Heart left ventricle (tissue), 16 donors: ENCODE measurements at regions of chr5 and their contacts with region 1.

Region 1: DNA sequence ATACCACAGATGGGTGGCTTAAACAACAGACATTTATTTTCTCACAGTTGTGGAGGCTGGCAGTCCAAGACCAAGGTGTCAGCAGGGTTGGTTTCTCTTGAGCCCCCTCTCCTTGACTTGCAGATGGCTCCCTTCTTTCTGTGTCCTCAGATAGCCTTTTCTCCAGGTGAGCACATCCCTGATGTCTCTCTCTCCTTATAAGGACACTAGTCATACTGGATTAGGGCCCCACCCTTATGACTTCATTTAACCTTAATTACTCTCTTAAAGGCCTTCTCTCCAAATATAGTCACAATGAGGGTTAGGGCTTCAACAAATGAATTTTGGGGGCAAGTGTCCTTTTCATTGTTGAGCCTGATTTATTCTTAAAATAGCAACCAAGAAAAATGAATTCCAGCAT is 14.7 kb downstream of the PTGER4 start:
- DNase-seq: no peak
- ATAC-seq: no peak
- H3K4me3 ChIP-seq: no peak overlapping the region
- H3K27ac ChIP-seq: no peak overlapping the region
- H3K4me1 ChIP-seq: peaks cover 0 to 15% (median 8%) of the 10 kb centered on the region in 12 donors
- H3K27me3 ChIP-seq: no peaks in the 10 kb centered on the region
- CTCF ChIP-seq: no peak
- POLR2A ChIP-seq: no peak

Region 2: DNA sequence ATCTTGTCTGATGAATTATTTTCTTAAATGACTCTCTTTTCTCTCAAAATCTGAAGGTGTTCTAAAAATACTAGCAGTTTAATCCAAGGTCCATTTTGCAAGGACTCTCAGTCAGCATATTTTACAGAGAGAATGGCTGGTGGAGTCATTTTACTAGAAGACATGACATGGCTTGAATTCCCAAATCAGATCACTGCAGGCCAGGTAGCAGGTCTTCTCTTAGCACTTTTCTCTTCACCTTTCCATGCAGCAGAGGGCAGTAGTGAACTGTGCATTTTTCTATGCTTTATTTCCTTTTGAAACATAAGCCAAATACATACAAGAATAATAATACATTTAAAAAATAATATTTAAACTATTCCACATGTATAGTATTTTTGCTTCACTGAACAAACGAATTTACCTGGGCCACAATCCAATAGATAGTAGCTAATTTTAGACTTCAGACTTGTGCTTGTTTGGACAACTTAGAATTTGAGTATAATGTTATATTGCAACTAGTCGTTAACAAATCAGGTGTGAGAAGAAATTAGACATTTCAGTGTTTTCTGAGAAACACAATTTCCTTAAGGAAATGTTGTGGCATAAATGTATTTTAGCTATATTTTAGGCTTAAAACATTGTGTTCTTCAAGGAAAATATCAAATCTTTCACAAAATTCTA is 980.3 kb before region 1 on chr5:
- intact Hi-C with region 1: loop called in 8 of 10 experiments (anchors 2 to 10 kb)
- DNase-seq: peak in 1 of 5 donors; percentile 14
- ATAC-seq: peak in 1 of 4 donors; percentile 53
- H3K4me3 ChIP-seq: no peak overlapping the region
- H3K27ac ChIP-seq: peak overlapping the region in 2 of 12 donors; percentile 6 to 25
- H3K4me1 ChIP-seq: peaks cover 0 to 8% (median 0%) of the 10 kb centered on the region in 12 donors
- H3K27me3 ChIP-seq: no peaks in the 10 kb centered on the region
- CTCF ChIP-seq: peak; percentile 35 to 67 (median 56)
- POLR2A ChIP-seq: no peak

Region 3: DNA sequence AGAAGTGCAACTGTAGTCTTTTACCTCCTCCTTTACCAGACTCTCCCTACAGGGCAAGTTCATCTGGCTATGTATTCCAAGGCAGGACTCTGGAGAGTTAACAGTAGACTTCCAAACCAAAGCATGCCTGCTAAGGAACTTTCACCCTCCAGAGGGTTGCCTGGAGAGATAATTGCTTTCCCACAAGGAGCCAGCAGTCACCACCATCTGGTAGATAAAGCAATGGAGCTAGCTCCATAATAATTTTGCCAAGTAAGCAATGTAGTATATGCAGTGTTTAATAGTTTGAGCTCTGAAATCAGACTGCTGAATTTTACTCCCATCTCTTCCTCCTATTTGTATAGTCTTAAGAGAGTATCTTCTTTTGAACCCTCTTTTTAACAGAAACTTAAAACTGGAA is 581.6 kb before region 1 on chr5:
- intact Hi-C with region 1: no loop called
- DNase-seq: no peak
- ATAC-seq: no peak
- H3K4me3 ChIP-seq: no peak overlapping the region
- H3K27ac ChIP-seq: no peak overlapping the region
- H3K4me1 ChIP-seq: peaks cover 0 to 14% (median 0%) of the 10 kb centered on the region in 12 donors
- H3K27me3 ChIP-seq: no peaks in the 10 kb centered on the region
- CTCF ChIP-seq: no peak
- POLR2A ChIP-seq: no peak

Region 4: DNA sequence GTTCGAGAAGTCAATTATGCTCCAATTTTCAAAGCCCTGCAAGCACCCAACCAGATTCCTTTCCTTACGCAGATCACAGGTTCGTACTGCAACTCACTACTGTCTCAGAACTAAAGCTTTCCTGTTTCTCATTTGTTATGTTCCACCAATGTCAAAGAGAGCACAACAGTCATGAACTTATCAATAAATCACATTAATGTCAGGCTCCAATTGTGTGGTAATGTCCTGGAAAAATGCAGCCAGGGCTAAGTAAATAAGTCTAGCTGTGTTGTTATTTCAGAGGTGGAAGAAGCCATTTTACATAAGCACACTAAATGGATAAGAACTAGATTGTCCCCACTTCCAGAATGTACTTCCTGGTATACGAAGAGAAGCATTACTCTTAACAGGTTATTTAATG is 503.3 kb before region 1 on chr5:
- intact Hi-C with region 1: no loop called
- DNase-seq: no peak
- ATAC-seq: no peak
- H3K4me3 ChIP-seq: no peak overlapping the region
- H3K27ac ChIP-seq: no peak overlapping the region
- H3K4me1 ChIP-seq: no peaks in the 10 kb centered on the region
- H3K27me3 ChIP-seq: no peaks in the 10 kb centered on the region
- CTCF ChIP-seq: no peak
- POLR2A ChIP-seq: no peak

Region 5: GRCh38 chr5:40616781-40617180 is 77.7 kb before region 1 on chr5:
- intact Hi-C with region 1: no loop called
- DNase-seq: no peak
- ATAC-seq: no peak
- H3K4me3 ChIP-seq: no peak overlapping the region
- H3K27ac ChIP-seq: peak overlapping the region in 1 of 12 donors; percentile 88
- H3K4me1 ChIP-seq: peaks cover 0 to 27% (median 0%) of the 10 kb centered on the region in 12 donors
- H3K27me3 ChIP-seq: no peaks in the 10 kb centered on the region
- CTCF ChIP-seq: no peak
- POLR2A ChIP-seq: no peak